Naive thymus-derived CD4-positive, alpha-beta T cell (primary cell): ENCODE measurements at regions of chrX and their contacts with region 1.

Region 1: DNA sequence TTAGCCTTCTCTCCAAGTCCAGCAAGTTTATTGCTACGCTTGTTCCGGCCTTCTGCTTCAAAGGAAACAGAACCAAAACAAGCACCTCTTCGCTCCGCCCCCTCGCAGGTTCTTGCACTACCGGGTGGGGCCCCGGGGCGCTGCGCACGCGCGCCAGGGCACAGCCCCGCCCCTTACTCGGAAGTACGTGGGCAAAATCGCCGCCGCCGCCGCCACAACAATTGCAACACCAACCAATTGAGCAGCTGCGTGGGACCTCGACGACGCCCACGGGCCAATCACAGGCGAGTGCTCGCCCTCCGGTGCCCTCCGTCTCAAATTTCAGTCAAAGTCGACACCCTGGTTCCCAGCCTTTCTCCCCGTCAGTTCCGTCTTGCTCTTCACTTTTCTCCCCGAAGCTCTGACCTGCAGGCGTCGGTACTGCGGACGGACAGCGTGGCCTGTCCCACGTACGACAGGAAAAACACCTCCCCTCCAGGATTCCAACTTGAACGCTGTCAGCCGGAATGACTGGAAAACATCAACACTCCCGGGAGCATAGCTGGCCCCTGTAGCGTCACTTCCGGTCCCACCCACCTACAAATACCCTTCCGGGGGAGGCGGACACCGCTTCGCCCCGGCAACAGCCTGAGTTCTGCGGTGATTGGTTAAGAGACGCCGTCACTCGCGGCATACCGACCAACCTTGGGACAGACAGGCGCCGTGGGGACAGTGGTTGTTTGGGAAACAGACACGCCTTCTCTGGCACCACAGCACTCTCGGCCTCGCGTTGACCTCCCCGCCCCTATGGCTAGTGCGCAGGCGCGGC is 624 bp upstream of the OTUD5 start:
- DNase-seq: peak; percentile 84 to 97 (median 95)
- ATAC-seq: peak; percentile 86
- H3K4me3 ChIP-seq: peak overlapping the region; percentile 89
- H3K4me3 Mint-ChIP-seq: peak overlapping the region; percentile 81 to 100 (median 98)
- H3K27ac ChIP-seq: peak overlapping the region; percentile 100
- H3K27ac Mint-ChIP-seq: peak overlapping the region; percentile 98 to 100 (median 100)
- H3K4me1 ChIP-seq: peaks cover 26 to 36% of the 10 kb centered on the region in 2 donors
- H3K4me1 Mint-ChIP-seq: peaks cover 9 to 55% (median 38%) of the 10 kb centered on the region in 7 donors
- H3K27me3 ChIP-seq: no peaks in the 10 kb centered on the region
- H3K27me3 Mint-ChIP-seq: peaks cover 0 to 2% (median 0%) of the 10 kb centered on the region in 5 donors

Region 2: GRCh38 chrX:48521353-48522243 is 436.4 kb before region 1 on chrX and contains the start of gene EBP:
- CTCF ChIA-PET with region 1: no interaction called
- POLR2A ChIA-PET with region 1: no interaction called
- intact Hi-C with region 1: loop called in 1 of 2 experiments (anchors 5 kb)
- DNase-seq: peak; percentile 82 to 96 (median 94)
- ATAC-seq: peak; percentile 98
- H3K4me3 ChIP-seq: peak within 1 kb of the TSS; percentile 78
- H3K4me3 Mint-ChIP-seq: peak within 1 kb of the TSS; percentile 73 to 93 (median 89)
- H3K27ac ChIP-seq: peak within 1 kb of the TSS; percentile 82
- H3K27ac Mint-ChIP-seq: peak within 1 kb of the TSS; percentile 90 to 99 (median 94)
- H3K4me1 ChIP-seq: peaks cover 12 to 19% of the 10 kb centered on the region in 2 donors
- H3K4me1 Mint-ChIP-seq: peaks cover 14 to 39% (median 34%) of the 10 kb centered on the region in 7 donors
- H3K27me3 ChIP-seq: no peaks in the 10 kb centered on the region
- H3K27me3 Mint-ChIP-seq: no peaks in the 10 kb centered on the region
- total RNA-seq, gene EBP: 33.3 to 188 (median 35.3) TPM

Region 3: GRCh38 chrX:48696301-48697181 is 261.5 kb before region 1 on chrX and contains the start of gene SUV39H1:
- CTCF ChIA-PET with region 1: no interaction called
- POLR2A ChIA-PET with region 1: interaction called, 10 read pairs
- intact Hi-C with region 1: loop called in 1 of 2 experiments (anchors 1 kb)
- DNase-seq: peak; percentile 76 to 90 (median 85)
- ATAC-seq: peak; percentile 97
- H3K4me3 ChIP-seq: peak within 1 kb of the TSS; percentile 62
- H3K4me3 Mint-ChIP-seq: peak within 1 kb of the TSS; percentile 86 to 95 (median 90)
- H3K27ac ChIP-seq: peak within 1 kb of the TSS; percentile 82
- H3K27ac Mint-ChIP-seq: peak within 1 kb of the TSS; percentile 91 to 96 (median 95)
- H3K4me1 ChIP-seq: peaks cover 0 to 13% of the 10 kb centered on the region in 2 donors
- H3K4me1 Mint-ChIP-seq: peaks cover 6 to 39% (median 28%) of the 10 kb centered on the region in 7 donors
- H3K27me3 ChIP-seq: no peaks in the 10 kb centered on the region
- H3K27me3 Mint-ChIP-seq: no peaks in the 10 kb centered on the region
- total RNA-seq, gene SUV39H1: 4.6 to 23.3 (median 8.6) TPM

Region 4: DNA sequence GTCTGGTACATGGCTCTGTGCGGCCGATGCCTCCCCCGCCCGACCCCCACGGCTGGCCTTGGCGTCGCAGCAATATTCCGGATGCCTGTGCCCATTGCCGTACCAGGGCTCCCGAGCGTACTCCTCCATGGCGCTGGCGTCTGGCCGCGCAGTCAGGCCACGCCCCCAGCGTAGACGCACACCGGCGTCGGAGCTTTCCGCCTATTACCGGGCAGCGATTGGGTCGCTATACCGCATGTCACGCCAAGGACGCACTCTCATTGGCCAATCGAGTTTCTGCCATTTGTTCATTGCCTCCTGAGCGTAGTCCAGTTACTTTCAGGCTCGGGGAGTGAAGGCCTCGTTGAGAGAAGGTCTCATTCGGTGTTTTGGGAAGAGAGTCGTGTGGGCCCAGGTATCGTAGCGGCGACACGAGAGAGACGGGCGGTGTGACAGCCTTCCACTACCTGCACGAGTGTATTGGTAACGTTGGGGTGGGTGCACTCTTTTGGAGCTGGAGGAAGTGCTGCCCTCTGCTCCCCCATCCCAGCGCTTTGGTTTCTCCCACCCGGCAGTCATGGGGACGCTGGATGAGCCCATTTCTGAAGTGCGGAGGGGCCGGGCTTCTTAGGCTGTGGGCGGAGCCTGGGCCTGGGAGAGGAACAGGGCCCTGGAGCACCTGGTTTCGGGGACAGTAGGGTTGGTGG is 60.3 kb before region 1 on chrX and contains the starts of genes PQBP1 and TIMM17B:
- CTCF ChIA-PET with region 1: interaction called, 4 read pairs
- POLR2A ChIA-PET with region 1: interaction called, 13 read pairs
- intact Hi-C with region 1: loop called in 1 of 2 experiments (anchors 1 kb)
- DNase-seq: peak; percentile 71 to 93 (median 89)
- ATAC-seq: peak; percentile 92
- H3K4me3 ChIP-seq: peak within 1 kb of the TSS; percentile 91
- H3K4me3 Mint-ChIP-seq: peak within 1 kb of the TSS; percentile 83 to 100 (median 91)
- H3K27ac ChIP-seq: peak within 1 kb of the TSS; percentile 98
- H3K27ac Mint-ChIP-seq: peak within 1 kb of the TSS; percentile 89 to 98 (median 94)
- H3K4me1 ChIP-seq: peaks cover 12 to 16% of the 10 kb centered on the region in 2 donors
- H3K4me1 Mint-ChIP-seq: peaks cover 6 to 42% (median 24%) of the 10 kb centered on the region in 7 donors
- H3K27me3 ChIP-seq: no peaks in the 10 kb centered on the region
- H3K27me3 Mint-ChIP-seq: no peaks in the 10 kb centered on the region
- total RNA-seq, gene PQBP1: 64.1 to 89.5 (median 74.6) TPM
- total RNA-seq, gene TIMM17B: 41.1 to 46.6 (median 44.2) TPM

Region 5: GRCh38 chrX:48937054-48937907 is 20.8 kb before region 1 on chrX:
- CTCF ChIA-PET with region 1: interaction called, 3 read pairs
- POLR2A ChIA-PET with region 1: interaction called, 135 read pairs
- intact Hi-C with region 1: loop called (anchors 1 kb)
- DNase-seq: peak; percentile 59 to 96 (median 92)
- ATAC-seq: peak; percentile 75
- H3K4me3 ChIP-seq: peak overlapping the region; percentile 70
- H3K4me3 Mint-ChIP-seq: peak overlapping the region; percentile 78 to 96 (median 88)
- H3K27ac ChIP-seq: peak overlapping the region; percentile 97
- H3K27ac Mint-ChIP-seq: peak overlapping the region; percentile 96 to 99 (median 99)
- H3K4me1 ChIP-seq: peaks cover 69 to 80% of the 10 kb centered on the region in 2 donors
- H3K4me1 Mint-ChIP-seq: peaks cover 36 to 91% (median 80%) of the 10 kb centered on the region in 7 donors
- H3K27me3 ChIP-seq: no peaks in the 10 kb centered on the region
- H3K27me3 Mint-ChIP-seq: peaks cover 0 to 3% (median 0%) of the 10 kb centered on the region in 5 donors

Region 6: GRCh38 chrX:49073601-49074571 is 115.9 kb after region 1 on chrX and contains the start of gene PRAF2:
- CTCF ChIA-PET with region 1: no interaction called
- POLR2A ChIA-PET with region 1: interaction called, 5 read pairs
- intact Hi-C with region 1: loop called in 1 of 2 experiments (anchors 1 kb)
- DNase-seq: peak; percentile 60 to 90 (median 86)
- ATAC-seq: peak; percentile 99
- H3K4me3 ChIP-seq: peak within 1 kb of the TSS; percentile 61
- H3K4me3 Mint-ChIP-seq: peak within 1 kb of the TSS; percentile 73 to 88 (median 83)
- H3K27ac ChIP-seq: peak within 1 kb of the TSS; percentile 78
- H3K27ac Mint-ChIP-seq: peak within 1 kb of the TSS; percentile 66 to 91 (median 86)
- H3K4me1 ChIP-seq: peaks cover 4 to 10% of the 10 kb centered on the region in 2 donors
- H3K4me1 Mint-ChIP-seq: peaks cover 9 to 25% (median 16%) of the 10 kb centered on the region in 7 donors
- H3K27me3 ChIP-seq: no peaks in the 10 kb centered on the region
- H3K27me3 Mint-ChIP-seq: no peaks in the 10 kb centered on the region
- total RNA-seq, gene PRAF2: 15.9 to 28.3 (median 20.4) TPM

Region 7: DNA sequence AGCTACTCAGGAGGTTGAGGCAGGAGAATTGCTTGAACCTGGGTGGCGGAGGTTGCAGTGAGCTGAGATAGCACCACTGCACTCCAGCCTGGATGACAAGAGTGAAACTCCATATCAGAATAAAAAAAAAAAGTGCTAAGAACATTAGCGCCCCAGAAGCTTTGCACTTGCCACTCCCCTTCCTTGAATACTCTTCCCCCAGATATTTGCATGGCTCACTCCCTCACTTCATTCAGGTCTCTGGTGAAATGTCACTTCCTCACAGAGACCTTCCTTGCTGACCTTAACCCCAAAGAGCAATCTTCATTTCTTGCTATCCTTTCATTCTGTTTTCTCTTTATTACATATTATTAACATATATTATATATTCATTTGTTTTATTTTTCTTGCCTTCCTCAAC is 263.8 kb after region 1 on chrX:
- CTCF ChIA-PET with region 1: no interaction called
- POLR2A ChIA-PET with region 1: no interaction called
- intact Hi-C with region 1: no loop called
- DNase-seq: no peak
- ATAC-seq: no peak
- H3K4me3 ChIP-seq: no peak overlapping the region
- H3K4me3 Mint-ChIP-seq: no peak overlapping the region
- H3K27ac ChIP-seq: no peak overlapping the region
- H3K27ac Mint-ChIP-seq: no peak overlapping the region
- H3K4me1 ChIP-seq: no peaks in the 10 kb centered on the region
- H3K4me1 Mint-ChIP-seq: peaks cover 0 to 4% (median 0%) of the 10 kb centered on the region in 7 donors
- H3K27me3 ChIP-seq: no peaks in the 10 kb centered on the region
- H3K27me3 Mint-ChIP-seq: peaks cover 0 to 10% (median 0%) of the 10 kb centered on the region in 5 donors

Region 8: GRCh38 chrX:49269010-49269767 is 311.2 kb after region 1 on chrX:
- CTCF ChIA-PET with region 1: no interaction called
- POLR2A ChIA-PET with region 1: interaction called, 3 read pairs
- intact Hi-C with region 1: loop called in 1 of 2 experiments (anchors 1 kb)
- DNase-seq: peak; percentile 72 to 97 (median 94)
- ATAC-seq: peak; percentile 89
- H3K4me3 ChIP-seq: peak overlapping the region; percentile 96
- H3K4me3 Mint-ChIP-seq: peak overlapping the region; percentile 91 to 100 (median 96)
- H3K27ac ChIP-seq: peak overlapping the region; percentile 99
- H3K27ac Mint-ChIP-seq: peak overlapping the region; percentile 99 to 100 (median 99)
- H3K4me1 ChIP-seq: peaks cover 30 to 34% of the 10 kb centered on the region in 2 donors
- H3K4me1 Mint-ChIP-seq: peaks cover 17 to 51% (median 42%) of the 10 kb centered on the region in 7 donors
- H3K27me3 ChIP-seq: no peaks in the 10 kb centered on the region
- H3K27me3 Mint-ChIP-seq: no peaks in the 10 kb centered on the region